ENCODE measurements at regions of chr6 and their contacts with region 1.

Region 1: GRCh38 chr6:63598049-63599036 is 26.1 kb downstream of the LOC128125822 start:
- DNase-seq: peak; percentile 13
- H3K4me3 ChIP-seq: peak overlapping the region; percentile 26 to 68 (median 42)
- H3K27ac ChIP-seq: no peak overlapping the region
- H3K4me1 ChIP-seq: peaks cover 0 to 16% (median 8%) of the 10 kb centered on the region in 3 donors
- H3K27me3 ChIP-seq: peaks cover 0 to 7% (median 0%) of the 10 kb centered on the region in 4 donors
- CTCF ChIP-seq: peak; percentile 47 to 87 (median 80)
- POLR2A ChIP-seq: no peak

Region 2: DNA sequence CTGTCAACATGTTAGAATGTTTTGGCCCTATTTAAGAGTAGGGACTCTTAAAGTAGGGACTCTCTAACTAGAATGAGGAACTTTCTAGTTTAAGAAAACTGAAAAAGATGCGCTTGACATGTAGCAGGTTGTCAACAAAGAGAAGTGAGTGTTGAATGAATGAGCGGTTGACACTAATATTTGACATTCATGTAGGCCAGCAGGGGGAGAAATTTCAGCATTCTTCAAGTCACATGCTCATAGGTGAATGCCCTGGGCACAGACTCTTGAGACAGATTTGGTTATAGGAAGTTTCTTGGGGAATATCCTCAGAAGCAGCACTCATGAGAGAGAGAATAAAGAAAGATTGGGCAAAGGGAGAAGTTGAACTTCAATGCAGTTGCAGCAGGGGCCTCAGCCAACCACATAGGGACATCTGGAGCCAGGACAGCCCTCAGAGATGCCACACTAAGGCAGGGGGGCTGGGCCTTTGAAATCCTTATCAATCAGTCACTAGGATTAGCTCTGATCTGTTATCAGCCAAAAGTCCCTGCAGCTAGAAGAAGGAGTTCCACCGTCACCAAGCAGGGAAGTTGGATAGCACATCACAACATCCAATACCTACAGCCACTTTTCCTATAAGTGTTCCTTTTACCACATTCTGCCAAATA is 532.2 kb before region 1 on chr6:
- intact Hi-C with region 1: no loop called
- DNase-seq: no peak
- H3K4me3 ChIP-seq: no peak overlapping the region
- H3K27ac ChIP-seq: no peak overlapping the region
- H3K4me1 ChIP-seq: no peaks in the 10 kb centered on the region
- H3K27me3 ChIP-seq: no peaks in the 10 kb centered on the region
- CTCF ChIP-seq: peak in 1 of 6 experiments; percentile 11
- POLR2A ChIP-seq: no peak

Region 3: GRCh38 chr6:63764318-63764916 is 166.1 kb after region 1 on chr6:
- intact Hi-C with region 1: loop called (anchors 5 kb)
- DNase-seq: no peak
- H3K4me3 ChIP-seq: no peak overlapping the region
- H3K27ac ChIP-seq: no peak overlapping the region
- H3K4me1 ChIP-seq: no peaks in the 10 kb centered on the region
- H3K27me3 ChIP-seq: peaks cover 0 to 14% (median 0%) of the 10 kb centered on the region in 4 donors
- CTCF ChIP-seq: peak in 5 of 6 experiments; percentile 35 to 68 (median 65)
- POLR2A ChIP-seq: no peak

Region 4: GRCh38 chr6:63943826-63944225 is 345.5 kb after region 1 on chr6:
- intact Hi-C with region 1: no loop called
- DNase-seq: no peak
- H3K4me3 ChIP-seq: no peak overlapping the region
- H3K27ac ChIP-seq: no peak overlapping the region
- H3K4me1 ChIP-seq: no peaks in the 10 kb centered on the region
- H3K27me3 ChIP-seq: no peaks in the 10 kb centered on the region
- CTCF ChIP-seq: no peak
- POLR2A ChIP-seq: no peak